ENCODE measurements at regions of chr19 and their contacts with region 1.

Region 1: GRCh38 chr19:46600384-46601317 is 479 bp upstream of the CALM3 start:
- DNase-seq: peak; percentile 97
- H3K4me3 Mint-ChIP-seq: peak overlapping the region; percentile 95
- H3K27ac Mint-ChIP-seq: peak overlapping the region; percentile 100
- H3K4me1 Mint-ChIP-seq: peaks cover 26% of the 10 kb centered on the region
- H3K27me3 Mint-ChIP-seq: no peaks in the 10 kb centered on the region

Region 2: GRCh38 chr19:46546194-46546896 is 54.3 kb before region 1 on chr19:
- CTCF ChIA-PET with region 1: no interaction called
- POLR2A ChIA-PET with region 1: no interaction called
- intact Hi-C with region 1: no loop called
- DNase-seq: peak; percentile 52
- H3K4me3 Mint-ChIP-seq: no peak overlapping the region
- H3K27ac Mint-ChIP-seq: no peak overlapping the region
- H3K4me1 Mint-ChIP-seq: peaks cover 2% of the 10 kb centered on the region
- H3K27me3 Mint-ChIP-seq: no peaks in the 10 kb centered on the region

Region 3: DNA sequence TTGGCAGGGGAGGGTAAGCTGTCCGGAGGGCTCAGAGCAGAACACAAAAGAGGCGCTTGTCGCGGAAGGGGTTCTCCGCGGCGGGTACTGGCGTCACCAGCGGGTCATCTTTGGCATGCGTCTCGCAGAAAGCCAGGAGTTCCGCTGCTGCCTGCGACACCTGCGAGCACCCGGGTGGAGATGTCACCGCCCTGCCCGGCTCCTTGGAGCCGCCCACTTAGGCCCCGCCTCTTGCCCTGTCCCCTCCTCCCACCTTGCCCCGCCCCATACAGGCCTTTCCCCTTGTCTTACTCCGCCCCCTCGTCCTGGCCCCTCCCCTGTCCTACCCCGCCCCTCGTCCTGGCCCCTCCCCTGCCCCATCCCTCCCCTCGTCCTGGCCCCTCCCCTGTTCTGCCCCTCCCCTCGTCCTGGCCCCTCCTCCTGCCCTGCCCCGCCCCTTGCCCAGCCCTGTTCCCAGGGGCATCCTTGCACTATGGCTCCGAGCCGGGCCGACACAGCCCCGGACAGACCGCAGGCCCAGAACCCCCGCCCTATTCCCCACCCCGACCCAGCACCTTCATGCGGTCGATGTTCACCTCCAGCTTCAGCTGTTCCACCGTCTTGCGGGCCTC is 33.5 kb after region 1 on chr19:
- CTCF ChIA-PET with region 1: interaction called, 3 read pairs
- POLR2A ChIA-PET with region 1: interaction called, 6 read pairs
- intact Hi-C with region 1: loop called (anchors 1 kb)
- DNase-seq: peak; percentile 99
- H3K4me3 Mint-ChIP-seq: peak overlapping the region; percentile 76
- H3K27ac Mint-ChIP-seq: peak overlapping the region; percentile 40
- H3K4me1 Mint-ChIP-seq: peaks cover 20% of the 10 kb centered on the region
- H3K27me3 Mint-ChIP-seq: no peaks in the 10 kb centered on the region

Region 4: DNA sequence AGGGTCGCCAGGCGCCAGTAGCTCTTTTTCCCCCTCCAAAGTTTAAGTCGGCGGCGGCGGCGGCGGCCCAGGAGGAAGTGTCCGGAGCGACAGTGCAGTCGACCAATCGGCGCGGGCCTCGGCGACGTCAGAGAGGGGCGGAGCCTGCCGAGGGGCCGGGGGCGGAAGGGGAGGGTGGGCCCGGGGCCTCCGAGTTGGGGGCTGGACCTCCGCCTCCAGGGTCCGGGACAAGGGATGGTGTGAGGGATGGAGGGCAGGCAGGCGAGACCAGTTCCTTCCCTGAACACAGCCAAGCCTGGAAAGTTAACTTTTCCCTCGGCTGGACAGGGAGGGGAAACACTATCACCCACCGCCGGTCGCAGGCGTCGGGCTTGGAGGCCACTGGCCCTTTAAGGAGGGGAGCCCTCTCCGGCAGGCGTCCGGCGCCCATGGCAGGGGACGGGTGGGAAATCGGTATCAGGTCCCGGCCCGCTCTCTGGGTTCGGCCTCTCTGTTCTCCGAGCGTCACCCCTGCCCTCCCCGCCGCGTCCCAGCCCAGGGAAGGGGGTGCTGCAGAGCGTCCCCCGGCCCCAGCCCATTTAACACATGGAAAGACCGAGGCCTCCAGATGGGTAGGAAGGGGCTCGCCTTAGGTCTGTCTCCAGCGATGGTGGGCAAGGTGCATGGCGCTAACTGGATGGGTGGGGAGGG is 116.5 kb after region 1 on chr19 and contains the start of gene PRKD2:
- CTCF ChIA-PET with region 1: interaction called, 9 read pairs
- POLR2A ChIA-PET with region 1: interaction called, 10 read pairs
- intact Hi-C with region 1: loop called (anchors 2 kb)
- DNase-seq: peak; percentile 94
- H3K4me3 Mint-ChIP-seq: peak within 1 kb of the TSS; percentile 93
- H3K27ac Mint-ChIP-seq: peak within 1 kb of the TSS; percentile 95
- H3K4me1 Mint-ChIP-seq: peaks cover 38% of the 10 kb centered on the region
- H3K27me3 Mint-ChIP-seq: no peaks in the 10 kb centered on the region
- total RNA-seq, gene PRKD2: 78.8 to 84.4 TPM

Measured in activated CD4-positive, alpha-beta memory T cell treated with anti-CD3 and anti-CD28 coated beads for 36 hours (primary cell).